Ascending aorta (tissue), 2 donors: ENCODE measurements at regions of chr1 and their contacts with region 1.

Region 1: DNA sequence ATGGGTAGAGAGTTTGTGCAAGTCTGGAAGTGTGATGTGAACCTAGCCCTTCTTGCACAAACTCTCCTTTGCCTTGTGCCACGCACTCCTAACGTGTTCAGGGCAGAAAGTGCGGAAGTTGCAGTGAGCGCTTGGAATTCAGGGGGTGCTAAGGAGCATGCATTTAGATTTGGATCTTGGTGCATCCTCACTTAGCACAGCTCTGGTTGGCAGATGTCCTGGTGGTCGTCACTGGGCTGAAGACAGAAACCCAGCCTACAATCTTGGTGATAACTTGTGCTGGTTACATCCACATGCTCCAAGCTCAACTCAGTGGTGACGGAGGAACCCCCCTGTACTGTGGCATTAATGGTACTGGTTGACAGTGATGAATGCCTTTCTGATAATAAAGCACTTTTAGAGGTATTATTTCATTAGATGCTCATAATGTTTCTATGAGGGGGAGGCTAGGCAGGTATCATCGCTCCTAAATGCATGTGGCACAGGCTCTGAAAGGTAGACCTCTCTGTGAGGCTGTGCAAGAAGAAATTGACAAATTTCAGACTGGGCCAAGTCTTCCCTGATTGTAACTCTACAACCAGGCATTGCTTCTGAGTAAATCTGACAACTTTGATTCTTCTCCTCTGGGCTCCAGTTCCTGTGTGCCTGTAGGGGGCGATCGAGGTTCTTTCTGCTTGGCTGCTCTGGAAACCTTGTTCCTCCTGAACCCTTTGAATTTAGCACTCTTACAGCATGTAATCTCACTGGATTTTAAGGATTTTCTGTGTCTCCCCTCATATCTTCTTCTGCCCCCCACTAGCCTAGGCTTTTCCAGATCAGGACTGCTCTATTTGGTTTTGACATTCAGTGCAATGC is 40.6 kb downstream of the MAPKAPK2 start:
- DNase-seq: peak in 1 of 2 donors; percentile 31
- H3K4me3 ChIP-seq: no peak overlapping the region
- H3K27ac ChIP-seq: peak overlapping the region; percentile 14 to 85
- H3K4me1 ChIP-seq: peaks cover 20 to 47% of the 10 kb centered on the region in 2 donors
- H3K27me3 ChIP-seq: no peaks in the 10 kb centered on the region
- CTCF ChIP-seq: peak; percentile 26 to 43 (median 41)

Region 2: GRCh38 chr1:206050655-206051235 is 674.6 kb before region 1 on chr1:
- intact Hi-C with region 1: no loop called
- DNase-seq: peak in 1 of 2 donors; percentile 55
- H3K4me3 ChIP-seq: no peak overlapping the region
- H3K27ac ChIP-seq: no peak overlapping the region
- H3K4me1 ChIP-seq: no peaks in the 10 kb centered on the region
- H3K27me3 ChIP-seq: no peaks in the 10 kb centered on the region
- CTCF ChIP-seq: no peak

Region 3: DNA sequence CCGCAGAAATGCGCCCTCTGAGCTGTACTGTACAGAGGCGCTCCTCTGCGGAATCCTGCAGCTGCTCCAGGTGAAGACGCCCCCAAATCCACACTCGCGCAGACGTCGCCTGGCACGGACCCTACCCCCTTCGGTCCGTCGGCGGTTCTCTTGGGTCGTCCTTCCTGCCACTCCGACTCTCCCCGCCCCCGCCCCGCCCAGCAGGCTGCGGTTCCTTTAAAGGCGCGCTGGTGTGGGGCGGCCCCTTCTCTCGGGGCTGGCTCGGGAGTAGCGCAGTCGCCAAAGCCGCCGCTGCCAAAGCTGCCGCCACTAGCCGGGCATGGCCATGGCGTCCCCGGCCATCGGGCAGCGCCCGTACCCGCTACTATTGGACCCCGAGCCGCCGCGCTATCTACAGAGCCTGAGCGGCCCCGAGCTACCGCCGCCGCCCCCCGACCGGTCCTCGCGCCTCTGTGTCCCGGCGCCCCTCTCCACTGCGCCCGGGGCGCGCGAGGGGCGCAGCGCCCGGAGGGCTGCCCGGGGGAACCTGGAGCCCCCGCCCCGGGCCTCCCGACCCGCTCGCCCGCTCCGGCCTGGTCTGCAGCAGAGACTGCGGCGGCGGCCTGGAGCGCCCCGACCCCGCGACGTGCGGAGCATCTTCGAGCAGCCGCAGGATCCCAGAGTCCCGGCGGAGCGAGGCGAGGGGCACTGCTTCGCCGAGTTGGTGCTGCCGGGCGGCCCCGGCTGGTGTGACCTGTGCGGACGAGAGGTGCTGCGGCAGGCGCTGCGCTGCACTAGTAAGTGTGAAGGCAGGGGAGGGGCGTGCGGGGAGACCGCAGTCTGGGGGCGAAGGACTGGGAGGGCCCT is 217.8 kb before region 1 on chr1 and contains the start of gene RASSF5:
- intact Hi-C with region 1: loop called (anchors 5 kb)
- DNase-seq: peak; percentile 72 to 94
- H3K4me3 ChIP-seq: peak within 1 kb of the TSS; percentile 96 to 98
- H3K27ac ChIP-seq: peak within 1 kb of the TSS; percentile 65 to 75
- H3K4me1 ChIP-seq: peaks cover 8 to 44% of the 10 kb centered on the region in 2 donors
- H3K27me3 ChIP-seq: no peaks in the 10 kb centered on the region
- CTCF ChIP-seq: no peak
- total RNA-seq, gene RASSF5: 8.9 TPM

Region 4: DNA sequence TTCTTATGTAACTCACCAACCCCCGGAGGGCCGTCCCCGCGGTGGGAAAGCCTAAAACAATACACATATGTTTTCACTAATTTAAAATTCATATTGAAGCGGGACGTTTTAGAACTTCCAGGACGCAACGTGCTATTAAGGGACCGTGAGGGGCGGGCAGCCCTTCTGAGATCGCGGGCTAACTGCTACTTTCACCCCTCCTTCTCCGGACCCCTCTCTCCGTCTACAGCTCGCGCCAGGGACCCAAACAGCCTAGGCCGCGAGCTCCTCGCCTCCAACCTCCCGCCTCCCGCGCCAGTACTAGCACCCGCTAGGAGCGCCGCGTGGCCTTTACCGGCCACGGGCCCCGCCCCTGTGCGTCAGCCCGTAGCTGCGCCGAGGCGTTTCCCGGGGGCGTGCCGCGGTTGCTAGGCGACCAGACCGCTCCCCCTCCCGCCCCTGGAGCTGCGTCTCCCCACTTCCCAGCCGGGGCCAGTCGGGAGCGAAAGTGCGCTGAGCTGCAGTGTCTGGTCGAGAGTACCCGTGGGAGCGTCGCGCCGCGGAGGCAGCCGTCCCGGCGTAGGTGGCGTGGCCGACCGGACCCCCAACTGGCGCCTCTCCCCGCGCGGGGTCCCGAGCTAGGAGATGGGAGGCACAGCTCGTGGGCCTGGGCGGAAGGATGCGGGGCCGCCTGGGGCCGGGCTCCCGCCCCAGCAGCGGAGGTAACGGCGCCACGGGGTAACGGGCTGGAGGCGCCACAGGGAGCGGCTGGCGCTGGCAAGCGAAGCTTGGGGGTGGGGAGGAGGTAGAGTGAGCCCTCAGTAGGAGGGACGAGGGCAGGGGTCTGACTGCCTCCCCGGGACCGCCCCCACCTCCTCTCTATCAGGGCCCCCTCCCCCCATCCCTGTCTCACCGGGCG is 90.0 kb before region 1 on chr1 and contains the start of gene DYRK3:
- intact Hi-C with region 1: loop called (anchors 1 kb)
- DNase-seq: peak; percentile 71 to 96
- H3K4me3 ChIP-seq: peak within 1 kb of the TSS; percentile 80 to 83
- H3K27ac ChIP-seq: peak within 1 kb of the TSS; percentile 77 to 79
- H3K4me1 ChIP-seq: peaks cover 0 to 22% of the 10 kb centered on the region in 2 donors
- H3K27me3 ChIP-seq: no peaks in the 10 kb centered on the region
- CTCF ChIP-seq: no peak
- total RNA-seq, gene DYRK3: 17.9 TPM

Region 5: GRCh38 chr1:206684478-206685333 is 40.6 kb before region 1 on chr1 and contains the start of gene MAPKAPK2:
- intact Hi-C with region 1: loop called (anchors 2 kb)
- DNase-seq: peak in 1 of 2 donors; percentile 88
- H3K4me3 ChIP-seq: peak within 1 kb of the TSS; percentile 72 to 89
- H3K27ac ChIP-seq: peak within 1 kb of the TSS; percentile 95 to 98
- H3K4me1 ChIP-seq: peaks cover 9 to 28% of the 10 kb centered on the region in 2 donors
- H3K27me3 ChIP-seq: no peaks in the 10 kb centered on the region
- CTCF ChIP-seq: no peak
- total RNA-seq, gene MAPKAPK2: 35.3 TPM

Region 6: GRCh38 chr1:206693029-206693428 is 32.3 kb before region 1 on chr1:
- intact Hi-C with region 1: loop called (anchors 2 kb)
- DNase-seq: peak; percentile 51 to 93
- H3K4me3 ChIP-seq: peak overlapping the region in 1 of 2 donors; percentile 42
- H3K27ac ChIP-seq: peak overlapping the region; percentile 89 to 92
- H3K4me1 ChIP-seq: peaks cover 36 to 80% of the 10 kb centered on the region in 2 donors
- H3K27me3 ChIP-seq: no peaks in the 10 kb centered on the region
- CTCF ChIP-seq: no peak

Region 7: DNA sequence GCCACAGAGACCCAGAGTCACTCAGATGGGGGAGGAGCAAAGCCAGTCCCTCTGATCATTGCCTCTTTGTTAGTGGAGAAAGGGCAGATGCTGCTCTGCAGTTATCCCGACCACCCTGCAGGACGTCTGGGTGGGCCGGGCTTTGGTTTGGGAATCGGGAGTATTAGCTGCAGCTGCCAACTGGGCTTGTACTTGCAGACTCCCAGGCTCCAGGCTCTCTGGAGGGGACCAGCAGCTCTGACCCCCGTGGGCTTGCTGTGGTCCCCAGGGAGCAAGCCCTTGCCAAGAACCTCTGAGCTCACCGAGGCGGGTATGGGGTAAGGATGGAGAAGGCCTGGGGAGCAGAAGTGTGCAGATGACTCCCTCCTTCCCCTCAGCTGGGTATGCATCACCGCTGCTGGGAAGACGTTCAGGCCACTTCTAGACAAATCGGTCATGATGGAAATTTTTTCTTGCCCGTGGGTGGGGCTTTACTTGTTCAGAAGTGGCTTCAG is 19.0 kb before region 1 on chr1:
- intact Hi-C with region 1: loop called (anchors 2 kb)
- DNase-seq: peak; percentile 48 to 92
- H3K4me3 ChIP-seq: peak overlapping the region; percentile 9 to 10
- H3K27ac ChIP-seq: peak overlapping the region; percentile 74 to 75
- H3K4me1 ChIP-seq: peaks cover 25 to 42% of the 10 kb centered on the region in 2 donors
- H3K27me3 ChIP-seq: no peaks in the 10 kb centered on the region
- CTCF ChIP-seq: no peak

Region 8: DNA sequence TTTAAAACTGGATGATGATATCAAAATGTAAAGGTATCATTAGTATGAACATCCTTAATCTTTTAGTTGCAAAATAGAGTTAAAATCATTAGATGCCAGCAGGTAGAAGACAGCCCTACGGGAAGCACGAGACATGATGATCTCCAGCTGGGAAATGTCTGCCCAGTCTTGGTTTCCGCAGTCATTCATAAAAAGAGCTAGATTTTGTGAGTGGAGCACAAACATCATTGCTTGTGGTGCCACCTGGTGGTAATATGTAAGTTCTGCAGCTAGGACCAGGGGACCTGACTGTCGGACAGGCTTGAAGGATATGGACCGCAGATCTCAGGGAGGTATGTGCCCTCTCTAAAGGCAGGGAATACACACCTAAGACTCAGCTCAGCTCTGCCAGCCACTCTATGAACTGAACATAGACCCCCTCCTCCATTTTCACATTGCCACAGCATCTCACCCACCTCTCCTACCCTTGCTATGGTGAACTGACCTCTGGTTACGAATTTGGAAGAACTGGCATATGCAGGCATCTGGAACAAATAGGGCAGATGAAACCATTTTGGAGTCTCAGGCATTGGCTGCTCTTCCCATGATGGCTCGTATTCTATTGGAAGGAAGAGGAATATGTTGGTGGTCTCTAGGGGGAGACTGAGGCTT is 187.2 kb after region 1 on chr1:
- intact Hi-C with region 1: loop called (anchors 5 kb)
- DNase-seq: peak in 1 of 2 donors; percentile 79
- H3K4me3 ChIP-seq: no peak overlapping the region
- H3K27ac ChIP-seq: no peak overlapping the region
- H3K4me1 ChIP-seq: peaks cover 0 to 10% of the 10 kb centered on the region in 2 donors
- H3K27me3 ChIP-seq: peaks cover 10% of the 10 kb centered on the region
- CTCF ChIP-seq: peak; percentile 72 to 82 (median 78)